GM18951 (cell line): ENCODE measurements at regions of chr3 and their contacts with region 1.

Region 1: DNA sequence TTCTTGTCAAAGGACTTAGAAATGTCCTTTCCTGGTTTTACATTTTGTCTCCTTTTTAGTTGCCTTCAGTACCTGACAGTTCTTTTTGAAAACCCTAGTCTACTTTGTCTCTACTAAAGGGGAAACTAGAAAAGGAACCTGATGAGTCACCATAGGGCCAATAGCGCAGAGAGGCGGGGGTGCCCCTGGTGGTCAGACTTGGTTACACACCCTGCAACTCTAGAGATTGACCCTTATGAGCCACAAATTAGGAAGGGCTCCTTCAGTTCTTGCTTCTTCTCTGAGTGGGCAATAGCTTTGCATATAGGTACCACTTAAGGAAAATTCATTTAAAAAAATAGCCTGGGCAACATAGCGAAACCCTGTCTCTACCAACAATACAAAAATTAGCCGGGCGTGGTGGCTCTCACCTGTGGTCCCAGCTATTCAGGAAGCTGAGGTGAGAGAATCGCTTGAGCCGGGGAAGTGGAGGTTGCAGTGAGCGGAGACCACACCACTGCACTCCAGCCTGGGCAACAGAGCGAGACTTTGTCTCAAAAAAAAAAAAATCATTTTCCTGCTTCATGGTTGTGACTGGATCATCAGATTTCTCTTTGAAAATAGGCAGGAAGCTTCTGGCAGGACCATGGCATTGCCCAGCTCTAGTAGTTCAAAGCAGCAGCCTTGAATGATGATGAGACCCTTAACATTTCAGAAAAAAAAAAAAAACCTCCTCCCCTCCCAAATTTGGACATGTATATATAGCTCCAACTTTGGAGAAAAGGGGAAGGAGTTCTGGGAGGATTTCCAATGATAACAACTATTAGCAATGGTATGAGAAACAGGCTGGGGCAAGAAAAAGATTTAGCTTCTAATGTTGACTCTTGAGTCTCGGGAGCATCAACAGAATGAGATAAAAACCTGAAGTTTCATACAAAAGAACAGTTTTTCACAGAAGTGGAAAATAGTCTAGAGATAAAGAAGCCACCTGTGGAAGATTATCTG is 45.2 kb upstream of the RASA2 start:
- POLR2A ChIP-seq: no peak

Region 2: GRCh38 chr3:141368062-141368924 is 73.4 kb before region 1 on chr3 and contains the start of gene ZBTB38:
- in situ Hi-C with region 1: loop called (anchors 5 kb)
- POLR2A ChIP-seq: no peak

Region 3: DNA sequence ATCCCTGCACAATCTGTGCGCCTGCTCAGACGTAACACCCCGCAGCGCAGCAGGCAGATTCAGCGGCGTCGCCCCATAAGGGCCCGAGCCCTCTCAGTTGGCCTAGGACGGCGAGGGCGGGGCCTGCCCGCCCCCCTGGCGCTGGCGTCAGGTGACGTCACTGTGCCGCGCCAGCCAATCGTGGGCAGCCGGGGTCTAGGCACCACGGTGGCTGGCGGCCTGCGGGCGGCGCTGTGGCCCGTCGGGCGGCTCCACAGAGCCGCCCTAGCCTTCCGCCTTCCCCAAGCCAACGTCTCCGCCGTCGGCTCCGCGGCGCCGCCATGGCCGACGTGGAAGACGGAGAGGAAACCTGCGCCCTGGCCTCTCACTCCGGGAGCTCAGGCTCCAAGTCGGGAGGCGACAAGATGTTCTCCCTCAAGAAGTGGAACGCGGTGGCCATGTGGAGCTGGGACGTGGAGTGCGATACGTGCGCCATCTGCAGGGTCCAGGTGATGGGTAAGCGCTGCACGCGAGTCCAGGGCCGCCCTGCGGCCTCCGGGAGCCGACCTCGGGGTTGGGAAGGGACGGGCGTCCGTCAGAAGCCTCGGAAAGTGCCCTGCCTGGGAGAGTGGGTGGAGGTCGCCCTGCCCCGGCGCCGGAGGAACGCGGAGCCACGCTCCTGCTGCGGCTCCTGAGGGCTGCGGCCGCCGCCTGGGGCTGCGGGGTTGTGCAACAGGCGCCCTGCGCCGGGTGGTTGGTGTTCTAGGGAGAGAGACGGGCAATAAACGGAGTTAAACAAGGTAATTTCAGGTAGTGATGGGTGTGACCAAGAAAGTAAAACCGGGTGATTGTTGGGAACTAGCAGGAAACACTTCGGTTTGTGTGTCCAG is 296.6 kb after region 1 on chr3 and contains the start of gene RNF7:
- in situ Hi-C with region 1: no loop called
- POLR2A ChIP-seq: peak; percentile 89